ENCODE measurements at regions of chr6 and their contacts with region 1.

Region 1: GRCh38 chr6:99514089-99514488 is 1.1 kb downstream of the USP45 start:
- DNase-seq: no peak
- H3K4me3 Mint-ChIP-seq: peak overlapping the region; percentile 97
- H3K27ac Mint-ChIP-seq: no peak overlapping the region
- H3K4me1 Mint-ChIP-seq: peaks cover 25% of the 10 kb centered on the region
- H3K27me3 Mint-ChIP-seq: peaks cover 6% of the 10 kb centered on the region

Region 2: GRCh38 chr6:98947351-98948292 is 566.5 kb before region 1 on chr6 and contains the start of gene FBXL4:
- intact Hi-C with region 1: loop called (anchors 2 kb)
- DNase-seq: peak; percentile 76
- H3K4me3 Mint-ChIP-seq: peak within 1 kb of the TSS; percentile 89
- H3K27ac Mint-ChIP-seq: peak within 1 kb of the TSS; percentile 93
- H3K4me1 Mint-ChIP-seq: peaks cover 28% of the 10 kb centered on the region
- H3K27me3 Mint-ChIP-seq: peaks cover 16% of the 10 kb centered on the region
- total RNA-seq, gene FBXL4: 12.6 and 13.9 TPM in 2 replicates

Region 3: DNA sequence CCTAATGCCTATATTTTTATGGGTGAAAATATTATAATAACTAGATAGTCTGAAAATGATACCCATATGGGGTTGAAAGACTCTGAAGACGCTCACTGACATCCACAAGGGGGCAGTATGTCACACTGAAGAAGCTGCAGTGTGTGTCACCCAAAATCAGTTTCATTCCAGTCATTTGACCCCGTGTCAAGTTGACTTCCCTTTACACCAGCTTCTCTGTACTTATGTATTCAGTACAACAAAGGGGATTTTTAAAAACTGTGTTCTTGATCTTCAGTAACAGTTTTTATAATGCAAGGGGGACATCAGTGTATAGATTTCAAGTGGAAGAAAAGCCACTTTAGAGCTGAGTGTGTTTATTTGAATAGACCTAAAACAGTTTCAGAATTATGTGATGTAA is 183.9 kb before region 1 on chr6:
- intact Hi-C with region 1: loop called (anchors 10 kb)
- DNase-seq: peak; percentile 40
- H3K4me3 Mint-ChIP-seq: no peak overlapping the region
- H3K27ac Mint-ChIP-seq: no peak overlapping the region
- H3K4me1 Mint-ChIP-seq: peaks cover 5% of the 10 kb centered on the region
- H3K27me3 Mint-ChIP-seq: peaks cover 2% of the 10 kb centered on the region

Region 4: DNA sequence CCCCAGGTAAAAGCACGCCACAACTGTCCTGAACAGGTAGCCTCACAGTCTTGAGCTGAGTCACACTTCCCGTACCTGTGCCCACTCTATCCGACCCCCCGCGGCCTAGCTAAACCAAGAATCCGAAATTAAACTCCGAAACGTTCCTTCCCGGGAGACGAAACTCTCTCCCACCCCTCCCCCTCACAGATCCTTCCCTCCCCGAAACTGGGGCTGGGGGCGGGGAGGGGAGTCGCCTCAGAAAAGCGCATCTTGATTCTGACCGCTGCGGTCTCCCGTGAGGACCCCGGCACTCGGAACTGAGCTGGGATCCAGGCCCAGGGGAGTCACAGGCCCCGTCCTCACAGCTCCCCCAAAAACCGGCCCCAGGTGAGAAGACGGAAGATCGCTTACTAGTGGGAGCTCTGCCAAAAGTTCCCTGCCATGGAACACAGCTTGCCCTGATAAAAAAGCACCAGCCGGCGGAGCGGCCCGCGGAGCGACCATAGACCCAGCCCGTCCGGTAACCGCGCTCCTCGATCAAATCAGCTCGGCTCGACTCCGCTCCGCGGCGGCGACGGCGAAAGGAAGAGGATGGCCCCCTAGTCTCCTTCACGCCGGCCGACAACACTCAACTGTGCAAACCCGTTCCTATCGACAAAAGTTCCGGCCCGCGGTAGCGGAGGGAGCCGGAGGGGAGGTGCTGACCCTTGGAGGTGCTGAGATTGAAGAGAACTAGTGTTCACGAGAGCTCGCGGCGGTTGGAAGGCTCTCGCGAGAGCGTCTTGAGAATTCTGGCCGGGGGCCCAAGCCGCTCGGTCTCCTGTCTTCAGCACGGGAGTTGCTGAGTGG is 54.2 kb after region 1 on chr6 and contains the start of gene CCNC:
- intact Hi-C with region 1: loop called (anchors 1 kb)
- DNase-seq: peak; percentile 88
- H3K4me3 Mint-ChIP-seq: peak within 1 kb of the TSS; percentile 98
- H3K27ac Mint-ChIP-seq: peak within 1 kb of the TSS; percentile 93
- H3K4me1 Mint-ChIP-seq: peaks cover 17% of the 10 kb centered on the region
- H3K27me3 Mint-ChIP-seq: peaks cover 2% of the 10 kb centered on the region
- total RNA-seq, gene CCNC: 49.2 and 52.1 TPM in 2 replicates

Region 5: GRCh38 chr6:99668036-99668705 is 154.1 kb after region 1 on chr6:
- intact Hi-C with region 1: no loop called
- DNase-seq: no peak
- H3K4me3 Mint-ChIP-seq: no peak overlapping the region
- H3K27ac Mint-ChIP-seq: no peak overlapping the region
- H3K4me1 Mint-ChIP-seq: no peaks in the 10 kb centered on the region
- H3K27me3 Mint-ChIP-seq: peaks cover 2% of the 10 kb centered on the region

Region 6: DNA sequence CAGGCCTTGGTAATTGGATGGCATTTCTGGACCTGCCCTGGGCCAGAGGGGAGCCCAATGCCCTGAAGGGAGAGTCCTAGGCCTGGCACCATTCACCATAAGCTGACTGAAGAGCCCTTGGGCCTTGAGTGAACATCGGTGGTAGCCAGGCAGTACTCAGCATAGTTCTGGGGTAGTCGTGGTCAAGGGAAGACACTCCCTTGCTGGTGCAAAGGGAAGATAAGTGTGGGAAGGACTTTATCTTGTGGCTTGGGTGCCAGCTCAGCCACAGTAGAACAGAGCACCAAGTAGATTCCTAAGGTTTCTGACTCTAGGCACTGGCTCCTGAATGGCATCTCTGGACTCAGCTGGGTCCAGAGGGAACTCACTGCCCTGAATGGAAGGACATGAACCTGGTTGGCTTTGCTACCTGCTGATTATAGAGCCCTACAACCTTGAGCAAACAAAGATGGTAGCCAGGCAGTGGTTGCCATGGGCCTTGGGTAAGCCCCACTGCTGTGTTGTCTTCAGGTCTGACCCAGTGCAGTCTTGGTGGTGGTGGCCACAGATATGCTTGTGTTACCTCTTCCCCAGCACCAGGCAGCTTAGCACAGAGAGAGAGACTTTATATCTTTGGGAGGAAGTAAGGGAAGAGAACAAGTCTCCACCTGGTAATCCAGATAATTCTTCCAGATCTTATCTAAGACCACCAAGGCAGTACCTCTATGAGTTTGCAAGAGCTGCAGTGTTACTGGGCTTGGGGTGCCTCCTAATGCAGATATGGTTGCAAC is 176.0 kb after region 1 on chr6:
- intact Hi-C with region 1: no loop called
- DNase-seq: no peak
- H3K4me3 Mint-ChIP-seq: no peak overlapping the region
- H3K27ac Mint-ChIP-seq: no peak overlapping the region
- H3K4me1 Mint-ChIP-seq: peaks cover 2% of the 10 kb centered on the region
- H3K27me3 Mint-ChIP-seq: no peaks in the 10 kb centered on the region

Measured in activated T-helper 2 cell treated with anti-CD3 and anti-CD28 coated beads, Interferon-gamma antibody, Interleukin-2, Interleukin-4, amounts not matched to agents 10 μg/mL and 5 μg/mL and 100 μg/mL, durations not matched to agents 14 hours and 24 hours and 36 hours (primary cell).